ENCODE measurements at regions of chr5 and their contacts with region 1.

Region 1: DNA sequence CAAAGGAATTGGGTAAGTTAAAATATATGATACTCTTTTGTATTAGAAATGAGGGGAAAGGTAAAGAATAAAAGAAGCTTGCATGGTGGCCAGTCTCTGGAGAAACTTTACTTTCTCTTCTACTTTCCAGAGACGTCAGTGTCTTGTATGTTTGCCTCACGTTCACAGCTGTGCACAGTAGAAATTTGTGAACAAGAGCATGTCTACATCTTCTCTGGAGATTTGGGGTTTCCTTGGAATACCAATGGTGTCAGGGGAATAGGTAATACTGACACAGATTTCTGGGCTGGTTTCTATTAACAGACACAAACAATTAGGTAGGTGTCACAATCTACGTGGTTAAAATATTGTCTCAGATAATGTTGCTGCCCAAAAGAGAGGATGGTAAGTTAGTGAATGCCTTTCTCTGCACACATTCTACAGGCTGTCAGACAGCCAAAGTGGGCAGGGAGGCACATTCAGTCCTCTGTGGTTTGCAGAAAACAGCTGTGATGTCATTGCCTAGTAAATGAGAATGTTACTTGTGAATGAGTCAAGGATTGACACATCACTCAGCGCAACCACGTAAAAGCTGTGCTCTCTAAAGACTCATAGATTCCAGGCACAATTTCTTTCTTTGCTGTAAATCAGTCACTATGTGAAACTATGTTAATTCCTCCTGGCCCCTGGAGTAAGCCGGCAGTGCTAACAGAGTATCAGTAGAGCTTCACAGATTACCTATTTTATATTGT is 397.1 kb downstream of the MAN2A1 start:
- DNase-seq: peak in 3 of 9 donors; percentile 8 to 49 (median 12)
- ATAC-seq: peak; percentile 52
- H3K4me3 ChIP-seq: no peak overlapping the region
- H3K4me3 Mint-ChIP-seq: peak overlapping the region in 1 of 10 donors; percentile 57
- H3K27ac ChIP-seq: no peak overlapping the region
- H3K27ac Mint-ChIP-seq: peak overlapping the region in 2 of 9 donors; percentile 34 to 44
- H3K4me1 ChIP-seq: no peaks in the 10 kb centered on the region
- H3K4me1 Mint-ChIP-seq: peaks cover 0 to 16% (median 0%) of the 10 kb centered on the region in 7 donors
- H3K27me3 ChIP-seq: no peaks in the 10 kb centered on the region
- H3K27me3 Mint-ChIP-seq: no peaks in the 10 kb centered on the region

Region 2: DNA sequence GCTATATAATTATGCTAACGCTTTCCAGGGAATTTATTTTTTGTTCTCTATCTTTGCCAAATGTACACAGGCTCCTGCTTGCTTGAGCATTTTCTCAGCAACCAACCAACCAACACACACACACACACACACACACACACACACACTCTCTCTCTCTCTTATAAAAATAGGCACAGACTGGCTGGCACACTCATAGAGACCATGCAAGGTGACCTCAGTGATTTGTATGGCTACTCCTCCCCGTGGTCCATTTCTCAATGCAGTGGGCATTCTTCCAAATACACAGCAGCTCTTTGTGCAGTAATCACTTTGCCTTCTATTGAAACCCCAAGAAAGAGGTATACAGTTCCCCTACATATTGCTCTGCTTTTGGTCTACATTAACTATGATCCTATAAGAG is 18.9 kb after region 1 on chr5:
- CTCF ChIA-PET with region 1: no interaction called
- POLR2A ChIA-PET with region 1: no interaction called
- intact Hi-C with region 1: loop called in 1 of 2 experiments (anchors 2 kb)
- DNase-seq: no peak
- ATAC-seq: no peak
- H3K4me3 ChIP-seq: no peak overlapping the region
- H3K4me3 Mint-ChIP-seq: peak overlapping the region in 4 of 10 donors; percentile 28 to 51 (median 49)
- H3K27ac ChIP-seq: no peak overlapping the region
- H3K27ac Mint-ChIP-seq: peak overlapping the region in 2 of 9 donors; percentile 12 to 48
- H3K4me1 ChIP-seq: peaks cover 7 to 23% of the 10 kb centered on the region in 2 donors
- H3K4me1 Mint-ChIP-seq: peaks cover 24 to 47% (median 42%) of the 10 kb centered on the region in 7 donors
- H3K27me3 ChIP-seq: no peaks in the 10 kb centered on the region
- H3K27me3 Mint-ChIP-seq: peaks cover 0 to 17% (median 0%) of the 10 kb centered on the region in 5 donors

Region 3: GRCh38 chr5:110159202-110159601 is 72.4 kb after region 1 on chr5:
- CTCF ChIA-PET with region 1: no interaction called
- POLR2A ChIA-PET with region 1: no interaction called
- intact Hi-C with region 1: no loop called
- DNase-seq: no peak
- ATAC-seq: no peak
- H3K4me3 ChIP-seq: no peak overlapping the region
- H3K4me3 Mint-ChIP-seq: no peak overlapping the region
- H3K27ac ChIP-seq: no peak overlapping the region
- H3K27ac Mint-ChIP-seq: no peak overlapping the region
- H3K4me1 ChIP-seq: no peaks in the 10 kb centered on the region
- H3K4me1 Mint-ChIP-seq: peaks cover 0 to 2% (median 0%) of the 10 kb centered on the region in 7 donors
- H3K27me3 ChIP-seq: no peaks in the 10 kb centered on the region
- H3K27me3 Mint-ChIP-seq: no peaks in the 10 kb centered on the region